Vagina (tissue), 2 donors: ENCODE measurements at regions of chr19 and their contacts with region 1.

Region 1: GRCh38 chr19:41554907-41555306 is 21.1 kb upstream of the CEACAM21 start:
- DNase-seq: no peak
- H3K4me3 ChIP-seq: no peak overlapping the region
- H3K27ac ChIP-seq: no peak overlapping the region
- H3K4me1 ChIP-seq: no peaks in the 10 kb centered on the region
- H3K27me3 ChIP-seq: no peaks in the 10 kb centered on the region
- CTCF ChIP-seq: no peak
- POLR2A ChIP-seq: no peak

Region 2: DNA sequence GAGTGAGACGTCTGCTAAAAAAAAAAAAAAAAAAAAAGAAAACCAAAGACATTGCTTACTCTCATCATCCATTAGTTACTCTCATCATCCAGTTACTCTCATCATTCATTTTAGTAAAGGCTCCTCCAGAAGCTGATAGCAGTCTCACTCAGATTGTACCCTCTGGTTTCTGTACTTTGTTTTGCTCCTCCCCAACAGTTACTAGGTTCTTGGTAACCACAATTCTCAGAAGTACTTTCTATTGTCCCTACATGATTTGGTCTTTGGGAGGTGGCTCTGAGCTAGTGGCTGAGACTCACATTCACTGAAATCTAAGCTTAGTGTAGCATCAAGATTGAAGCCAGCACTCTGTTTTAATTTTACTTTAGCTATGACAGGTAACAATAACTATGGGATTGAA is 97.7 kb before region 1 on chr19:
- intact Hi-C with region 1: loop called (anchors 10 kb)
- DNase-seq: no peak
- H3K4me3 ChIP-seq: no peak overlapping the region
- H3K27ac ChIP-seq: no peak overlapping the region
- H3K4me1 ChIP-seq: peaks cover 12% of the 10 kb centered on the region
- H3K27me3 ChIP-seq: no peaks in the 10 kb centered on the region
- CTCF ChIP-seq: no peak
- POLR2A ChIP-seq: no peak